ENCODE measurements at regions of chr3 and their contacts with region 1.

Region 1: GRCh38 chr3:70988111-70988510 is 595.4 kb downstream of the FOXP1 start:
- DNase-seq: no peak
- ATAC-seq: no peak
- H3K4me3 ChIP-seq: no peak overlapping the region
- H3K4me3 Mint-ChIP-seq: no peak overlapping the region
- H3K27ac ChIP-seq: no peak overlapping the region
- H3K27ac Mint-ChIP-seq: peak overlapping the region; percentile 43 to 68
- H3K4me1 ChIP-seq: peaks cover 11 to 28% of the 10 kb centered on the region in 2 experiments
- H3K4me1 Mint-ChIP-seq: peaks cover 79 to 82% (median 81%) of the 10 kb centered on the region in 3 donors
- H3K27me3 ChIP-seq: no peaks in the 10 kb centered on the region
- H3K27me3 Mint-ChIP-seq: no peaks in the 10 kb centered on the region

Region 2: GRCh38 chr3:70963431-70964275 is 24.5 kb before region 1 on chr3:
- CTCF ChIA-PET with region 1: no interaction called
- POLR2A ChIA-PET with region 1: interaction called in 1 of 2 experiments, 10 read pairs
- DNase-seq: no peak
- ATAC-seq: no peak
- H3K4me3 ChIP-seq: no peak overlapping the region
- H3K4me3 Mint-ChIP-seq: no peak overlapping the region
- H3K27ac ChIP-seq: no peak overlapping the region
- H3K27ac Mint-ChIP-seq: peak overlapping the region in 1 of 2 donors; percentile 13
- H3K4me1 ChIP-seq: no peaks in the 10 kb centered on the region
- H3K4me1 Mint-ChIP-seq: peaks cover 0 to 13% (median 7%) of the 10 kb centered on the region in 3 donors
- H3K27me3 ChIP-seq: no peaks in the 10 kb centered on the region
- H3K27me3 Mint-ChIP-seq: no peaks in the 10 kb centered on the region